Natural killer cell (primary cell): ENCODE measurements at regions of chr11 and their contacts with region 1.

Region 1: GRCh38 chr11:63768237-63769043 is at the start of gene ZFTA:
- DNase-seq: peak; percentile 71 to 79
- ATAC-seq: peak; percentile 69 to 79 (median 77)
- H3K4me3 ChIP-seq: peak within 1 kb of the TSS; percentile 83
- H3K4me3 Mint-ChIP-seq: peak within 1 kb of the TSS; percentile 98
- H3K27ac ChIP-seq: no peak within 1 kb of the TSS
- H3K27ac Mint-ChIP-seq: peak within 1 kb of the TSS; percentile 80 to 84
- H3K4me1 ChIP-seq: peaks cover 22% of the 10 kb centered on the region
- H3K4me1 Mint-ChIP-seq: peaks cover 9 to 11% of the 10 kb centered on the region in 2 donors
- H3K27me3 ChIP-seq: peaks cover 12% of the 10 kb centered on the region
- H3K27me3 Mint-ChIP-seq: peaks cover 5 to 12% of the 10 kb centered on the region in 2 donors
- CTCF ChIP-seq: peak; percentile 67
- total RNA-seq, gene ZFTA: 3.7 to 5.3 (median 4.8) TPM

Region 2: GRCh38 chr11:63945477-63946163 is 177.2 kb after region 1 on chr11:
- intact Hi-C with region 1: loop called (anchors 5 kb)
- DNase-seq: peak; percentile 30 to 75
- ATAC-seq: peak in 2 of 3 donors; percentile 81 to 89
- H3K4me3 ChIP-seq: no peak overlapping the region
- H3K4me3 Mint-ChIP-seq: no peak overlapping the region
- H3K27ac ChIP-seq: no peak overlapping the region
- H3K27ac Mint-ChIP-seq: no peak overlapping the region
- H3K4me1 ChIP-seq: peaks cover 13% of the 10 kb centered on the region
- H3K4me1 Mint-ChIP-seq: peaks cover 9% of the 10 kb centered on the region in 2 donors
- H3K27me3 ChIP-seq: no peaks in the 10 kb centered on the region
- H3K27me3 Mint-ChIP-seq: no peaks in the 10 kb centered on the region
- CTCF ChIP-seq: peak; percentile 57